ENCODE measurements at regions of chr2 and their contacts with region 1.

Region 1: DNA sequence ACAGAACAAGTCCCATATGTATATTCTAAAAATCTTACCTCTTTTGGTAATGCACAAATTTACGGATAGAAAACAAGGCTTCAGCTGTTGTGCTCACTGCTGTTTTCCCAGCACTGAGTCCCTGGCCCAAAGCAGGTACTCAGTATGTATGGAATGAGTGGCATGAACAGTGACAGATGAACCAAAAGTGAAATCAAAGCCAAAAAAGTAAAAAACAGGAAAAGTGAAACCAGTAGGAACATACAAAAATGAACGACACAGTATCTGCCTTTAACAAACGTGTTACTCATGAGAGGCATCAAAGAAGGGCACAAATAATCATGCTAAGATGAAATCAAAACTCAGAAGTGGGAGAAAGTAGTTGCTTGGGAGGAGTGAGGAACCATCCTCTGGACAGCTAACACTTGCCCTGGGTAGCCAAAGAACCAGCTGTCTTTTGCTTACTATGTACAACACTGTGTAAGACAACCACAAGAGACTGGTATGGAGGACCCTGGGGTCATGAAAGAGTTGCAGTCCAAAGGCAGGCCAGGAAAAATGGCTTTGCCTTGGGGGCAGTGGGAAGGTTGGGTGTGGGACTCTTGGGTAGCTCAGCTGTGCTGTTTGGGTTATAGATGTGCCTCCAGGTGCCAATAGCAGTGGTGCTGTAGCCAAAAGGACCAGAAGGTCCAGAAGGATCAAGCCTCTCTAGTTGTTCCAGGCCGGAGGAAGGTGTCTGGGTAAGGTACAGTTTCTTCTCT is 39.8 kb upstream of the PLA2R1 start:
- DNase-seq: no peak
- ATAC-seq: no peak
- H3K4me3 ChIP-seq: no peak overlapping the region
- H3K27ac ChIP-seq: no peak overlapping the region
- H3K4me1 ChIP-seq: no peaks in the 10 kb centered on the region
- H3K27me3 ChIP-seq: no peaks in the 10 kb centered on the region
- CTCF ChIP-seq: no peak
- POLR2A ChIP-seq: no peak

Region 2: DNA sequence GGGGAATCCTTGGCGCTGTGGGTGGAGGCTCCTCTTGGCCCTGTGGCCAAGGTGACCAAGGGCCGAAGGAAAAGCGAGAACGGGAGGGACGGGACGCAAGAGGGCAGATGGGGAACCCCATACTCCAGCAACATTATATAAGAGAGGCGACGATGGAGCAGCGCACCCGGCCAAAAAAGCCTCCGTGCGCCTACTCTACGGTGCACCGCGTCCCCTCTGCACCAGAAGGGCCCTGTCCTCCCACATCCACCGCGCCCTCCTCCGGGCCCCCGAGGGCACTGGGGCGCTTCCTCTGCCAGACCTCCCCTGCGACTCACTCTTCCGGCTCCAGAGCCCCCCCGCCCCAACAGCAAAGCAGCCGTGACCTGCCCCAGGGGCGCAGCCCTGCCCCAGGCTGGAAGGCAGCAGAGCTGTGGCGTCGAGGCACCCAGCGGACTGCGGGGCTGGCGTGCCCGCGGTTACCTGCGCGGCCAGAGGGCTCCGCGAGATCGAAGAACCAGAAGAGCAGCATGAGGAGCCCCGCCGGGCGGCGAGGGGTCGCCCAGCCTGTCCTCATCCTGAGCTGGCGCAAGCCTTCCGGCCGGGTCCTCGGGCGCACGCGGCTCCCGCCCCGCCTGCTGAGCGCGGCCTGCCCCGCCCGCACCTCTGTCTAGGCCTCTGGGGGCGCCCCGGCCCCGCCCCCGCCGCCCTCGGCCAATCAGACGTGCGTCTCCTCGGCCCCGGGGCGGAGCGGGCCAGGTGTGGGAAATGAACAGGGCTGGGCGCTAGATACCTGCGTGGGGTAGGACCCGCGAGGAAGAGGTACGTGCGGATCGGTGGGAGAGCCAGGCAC is 197.8 kb before region 1 on chr2:
- intact Hi-C with region 1: loop called in 1 of 10 experiments (anchors 5 kb)
- DNase-seq: peak; percentile 22 to 83 (median 53)
- ATAC-seq: peak; percentile 14 to 85 (median 76)
- H3K4me3 ChIP-seq: peak within 1 kb of the TSS; percentile 24 to 73 (median 52)
- H3K27ac ChIP-seq: peak within 1 kb of the TSS in 3 of 12 donors; percentile 22 to 85 (median 28)
- H3K4me1 ChIP-seq: peaks cover 0 to 23% (median 9%) of the 10 kb centered on the region in 12 donors
- H3K27me3 ChIP-seq: peaks cover 0 to 11% (median 0%) of the 10 kb centered on the region in 9 donors
- CTCF ChIP-seq: no peak
- POLR2A ChIP-seq: no peak

Region 3: DNA sequence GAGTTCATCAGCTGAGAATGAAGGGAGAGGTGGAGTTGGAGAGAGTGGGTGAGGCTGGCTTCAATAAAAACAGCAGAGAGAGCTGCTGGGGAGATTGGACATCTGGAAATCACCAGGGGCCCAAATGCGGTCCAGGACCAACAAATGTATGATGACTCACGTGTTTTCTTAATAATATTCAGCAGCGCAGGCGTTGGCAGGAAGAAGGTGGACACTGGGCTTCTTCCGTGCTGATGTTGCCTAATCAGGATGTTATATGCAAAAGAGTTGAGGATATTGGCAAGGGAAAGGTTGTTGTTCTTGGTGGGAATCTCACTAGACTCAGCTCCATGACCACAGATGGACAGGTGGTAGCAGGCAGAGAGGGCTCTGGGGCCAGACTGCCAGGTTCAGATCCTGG is 27.0 kb before region 1 on chr2:
- intact Hi-C with region 1: no loop called
- DNase-seq: peak in 2 of 5 donors; percentile 35 to 43
- ATAC-seq: peak; percentile 42 to 90 (median 72)
- H3K4me3 ChIP-seq: no peak overlapping the region
- H3K27ac ChIP-seq: no peak overlapping the region
- H3K4me1 ChIP-seq: peaks cover 0 to 7% (median 0%) of the 10 kb centered on the region in 12 donors
- H3K27me3 ChIP-seq: no peaks in the 10 kb centered on the region
- CTCF ChIP-seq: no peak
- POLR2A ChIP-seq: no peak

Region 4: DNA sequence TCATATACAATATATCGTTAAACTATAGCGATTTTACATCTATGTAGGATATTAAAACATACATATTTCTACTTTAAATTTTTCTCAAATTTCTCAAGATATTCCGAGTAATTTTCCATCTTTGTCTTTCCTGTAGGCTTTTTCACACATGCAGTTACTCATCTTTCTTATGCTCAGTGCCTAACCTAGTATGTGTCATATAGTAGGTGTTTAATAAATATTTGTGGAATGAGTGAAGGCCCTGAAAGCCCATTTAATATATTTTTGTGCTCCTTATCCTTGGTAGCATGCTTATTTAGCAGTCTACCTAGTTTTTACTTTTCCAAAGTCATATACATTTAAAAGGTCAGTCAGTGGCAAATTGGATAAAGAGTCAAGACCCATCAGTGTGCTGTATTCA is 30.6 kb after region 1 on chr2:
- intact Hi-C with region 1: no loop called
- DNase-seq: no peak
- ATAC-seq: no peak
- H3K4me3 ChIP-seq: no peak overlapping the region
- H3K27ac ChIP-seq: no peak overlapping the region
- H3K4me1 ChIP-seq: no peaks in the 10 kb centered on the region
- H3K27me3 ChIP-seq: no peaks in the 10 kb centered on the region
- CTCF ChIP-seq: no peak
- POLR2A ChIP-seq: no peak